ENCODE measurements at regions of chr17 and their contacts with region 1.

Region 1: GRCh38 chr17:42997984-42998938 is at the start of gene RPL27:
- DNase-seq: peak; percentile 86 to 99 (median 98)
- ATAC-seq: peak; percentile 94 to 95
- H3K4me3 Mint-ChIP-seq: peak within 1 kb of the TSS; percentile 93 to 98 (median 96)
- H3K27ac Mint-ChIP-seq: peak within 1 kb of the TSS; percentile 91 to 100 (median 99)
- H3K4me1 Mint-ChIP-seq: peaks cover 16 to 35% (median 27%) of the 10 kb centered on the region in 4 donors
- H3K27me3 Mint-ChIP-seq: no peaks in the 10 kb centered on the region
- polyA plus RNA-seq, gene RPL27: 2,416 to 2,846 (median 2,434) TPM

Region 2: DNA sequence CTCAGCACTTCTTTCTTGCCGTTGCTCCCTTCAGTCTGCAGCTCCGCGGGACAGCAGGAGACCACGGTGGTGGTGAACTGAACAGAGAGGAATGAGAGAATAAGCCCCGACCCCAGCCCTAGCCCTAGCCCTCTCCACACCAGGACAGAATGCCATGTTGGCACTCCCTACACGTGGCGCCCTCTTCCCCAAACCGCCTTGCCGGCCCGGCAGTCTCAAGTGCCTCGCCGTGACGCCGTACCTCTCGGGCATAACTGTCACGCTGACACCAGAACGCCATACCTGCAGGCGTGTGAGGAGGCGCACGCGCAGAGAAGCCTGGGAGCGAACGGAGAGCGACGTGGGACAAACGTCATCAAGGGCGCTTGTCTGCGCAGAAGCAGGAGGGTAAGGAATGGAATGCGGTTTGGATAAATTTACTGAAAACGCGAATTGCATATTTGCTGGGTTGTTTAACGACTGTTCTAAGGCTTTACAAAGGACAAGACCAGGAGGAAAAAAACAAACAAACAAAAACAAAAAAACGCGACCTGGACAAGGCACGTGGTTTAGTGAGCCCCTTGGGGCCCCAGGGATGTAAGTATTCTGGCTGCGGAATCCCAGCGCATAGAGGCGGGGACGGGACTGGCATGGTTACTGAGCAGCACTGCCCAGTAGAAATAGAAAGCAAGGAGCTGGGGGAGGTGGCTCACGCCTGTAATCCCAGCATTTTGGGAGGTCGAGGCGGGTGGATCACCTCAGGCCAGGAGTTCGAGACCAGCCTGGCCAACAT is 33.9 kb before region 1 on chr17 and contains the start of gene AARSD1:
- POLR2A ChIA-PET with region 1: interaction called, 11 read pairs
- DNase-seq: peak; percentile 79 to 95 (median 88)
- ATAC-seq: peak; percentile 97 to 98
- H3K4me3 Mint-ChIP-seq: peak within 1 kb of the TSS; percentile 88 to 99 (median 96)
- H3K27ac Mint-ChIP-seq: peak within 1 kb of the TSS; percentile 91 to 99 (median 96)
- H3K4me1 Mint-ChIP-seq: peaks cover 8 to 22% (median 20%) of the 10 kb centered on the region in 4 donors
- H3K27me3 Mint-ChIP-seq: peaks cover 0 to 2% (median 0%) of the 10 kb centered on the region in 5 donors
- polyA plus RNA-seq, gene AARSD1: 40.5 to 56.2 (median 45.2) TPM

Region 3: DNA sequence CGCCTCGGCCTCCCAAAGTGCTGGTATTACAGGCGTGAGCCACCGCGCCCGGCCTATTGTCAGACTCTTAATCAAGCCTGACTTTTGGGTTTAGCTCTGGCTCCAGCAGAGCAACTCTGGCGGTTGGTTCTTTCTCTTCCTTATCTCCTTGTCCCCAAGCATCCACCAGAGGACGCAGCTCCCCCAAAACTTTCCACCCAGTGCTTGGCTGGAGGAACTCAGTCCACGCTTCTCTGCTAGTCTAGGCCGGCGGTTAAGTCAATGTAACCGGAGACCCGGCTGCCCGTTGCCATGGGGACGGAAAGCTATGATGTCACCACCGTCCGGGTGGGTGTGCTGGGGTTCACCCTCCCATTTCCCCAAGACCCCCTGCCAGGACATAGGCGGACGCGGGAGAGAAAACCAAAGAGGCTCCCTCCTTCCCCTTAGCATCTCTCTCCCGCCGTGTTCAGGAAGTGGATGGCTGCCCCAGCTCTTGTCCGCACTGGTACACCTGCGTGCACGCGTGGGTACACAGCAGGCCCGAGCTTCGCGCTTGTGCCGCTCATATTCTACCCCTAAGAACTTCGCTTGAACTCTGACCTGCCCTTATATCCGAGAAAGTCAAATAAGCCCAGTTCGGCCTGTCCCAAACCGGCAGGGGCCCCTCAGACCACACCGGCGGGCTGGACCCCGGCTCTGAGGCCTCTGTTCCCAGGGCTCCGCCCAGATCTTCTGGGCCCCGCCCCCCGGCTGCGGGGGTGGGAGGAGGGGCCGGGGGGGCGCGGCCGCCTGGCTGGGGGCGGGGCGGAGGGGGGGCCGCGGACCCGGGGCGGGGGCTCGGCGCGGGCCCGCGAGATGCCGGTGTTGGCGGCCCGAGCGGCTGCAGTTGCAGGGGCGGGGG is 26.4 kb after region 1 on chr17 and contains the start of gene RND2:
- POLR2A ChIA-PET with region 1: interaction called, 29 read pairs
- DNase-seq: peak; percentile 72 to 93 (median 78)
- ATAC-seq: peak; percentile 66
- H3K4me3 Mint-ChIP-seq: peak within 1 kb of the TSS; percentile 84 to 95 (median 92)
- H3K27ac Mint-ChIP-seq: peak within 1 kb of the TSS; percentile 85 to 96 (median 94)
- H3K4me1 Mint-ChIP-seq: peaks cover 18 to 38% (median 27%) of the 10 kb centered on the region in 4 donors
- H3K27me3 Mint-ChIP-seq: no peaks in the 10 kb centered on the region
- polyA plus RNA-seq, gene RND2: 0.08 to 0.09 TPM in 2 of 3 donors, not detected in the other

Region 4: DNA sequence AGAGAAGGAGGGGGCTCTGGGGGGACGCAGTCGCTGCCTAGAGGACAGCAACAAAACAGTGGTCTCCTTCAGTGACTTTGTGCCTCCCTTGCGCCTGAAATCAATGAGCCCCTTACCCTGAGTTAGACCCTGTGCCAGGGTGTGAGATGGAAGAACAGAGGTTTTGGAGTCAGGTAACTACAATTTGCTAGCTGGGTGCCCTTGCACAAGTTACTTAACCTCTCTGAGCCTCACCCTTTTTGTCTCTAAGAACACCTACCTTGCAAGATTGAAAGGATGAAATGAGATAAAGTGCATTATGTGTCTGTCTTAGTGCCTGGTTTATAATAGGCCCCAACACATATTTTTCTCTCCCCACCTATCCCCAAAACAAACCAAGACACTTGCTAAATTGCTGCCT is 36.6 kb after region 1 on chr17:
- POLR2A ChIA-PET with region 1: no interaction called
- DNase-seq: no peak
- ATAC-seq: no peak
- H3K4me3 Mint-ChIP-seq: no peak overlapping the region
- H3K27ac Mint-ChIP-seq: peak overlapping the region in 2 of 10 donors; percentile 18 to 70
- H3K4me1 Mint-ChIP-seq: no peaks in the 10 kb centered on the region
- H3K27me3 Mint-ChIP-seq: no peaks in the 10 kb centered on the region

Region 5: DNA sequence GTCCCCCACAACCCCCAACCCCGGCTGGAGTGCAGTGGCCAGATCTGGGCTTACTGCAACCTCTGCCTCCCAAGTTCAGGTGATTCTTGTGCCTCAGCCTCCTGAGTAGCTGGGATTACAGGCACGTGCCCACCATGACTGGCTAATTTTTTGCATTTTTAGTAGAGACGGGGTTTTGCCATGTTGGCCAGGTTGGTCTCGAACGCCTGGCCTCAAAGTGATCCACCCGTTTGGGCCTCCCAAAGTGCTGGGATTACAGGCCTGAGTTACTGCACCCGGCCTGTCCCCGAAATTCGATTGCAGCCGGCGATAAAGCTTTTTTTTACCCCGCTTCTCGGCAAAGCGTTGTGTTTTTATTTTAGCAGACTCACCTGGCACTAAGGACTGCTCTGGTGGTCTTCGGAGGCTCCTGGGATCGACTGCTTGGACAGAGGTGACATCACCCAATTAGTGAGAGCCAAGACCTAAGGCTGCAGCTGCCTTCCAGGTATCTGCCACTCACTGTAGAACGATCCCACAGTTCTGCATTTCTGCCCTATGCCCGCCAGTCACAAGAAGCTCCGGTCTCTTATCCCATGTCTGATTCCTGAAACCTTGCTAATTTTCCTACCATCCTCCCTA is 318.4 kb after region 1 on chr17:
- POLR2A ChIA-PET with region 1: interaction called, 28 read pairs
- DNase-seq: peak in 3 of 10 donors; percentile 8 to 36 (median 31)
- ATAC-seq: no peak
- H3K4me3 Mint-ChIP-seq: peak overlapping the region in 4 of 10 donors; percentile 7 to 64 (median 51)
- H3K27ac Mint-ChIP-seq: peak overlapping the region in 8 of 10 donors; percentile 6 to 84 (median 58)
- H3K4me1 Mint-ChIP-seq: peaks cover 5 to 16% (median 13%) of the 10 kb centered on the region in 4 donors
- H3K27me3 Mint-ChIP-seq: no peaks in the 10 kb centered on the region

Region 6: DNA sequence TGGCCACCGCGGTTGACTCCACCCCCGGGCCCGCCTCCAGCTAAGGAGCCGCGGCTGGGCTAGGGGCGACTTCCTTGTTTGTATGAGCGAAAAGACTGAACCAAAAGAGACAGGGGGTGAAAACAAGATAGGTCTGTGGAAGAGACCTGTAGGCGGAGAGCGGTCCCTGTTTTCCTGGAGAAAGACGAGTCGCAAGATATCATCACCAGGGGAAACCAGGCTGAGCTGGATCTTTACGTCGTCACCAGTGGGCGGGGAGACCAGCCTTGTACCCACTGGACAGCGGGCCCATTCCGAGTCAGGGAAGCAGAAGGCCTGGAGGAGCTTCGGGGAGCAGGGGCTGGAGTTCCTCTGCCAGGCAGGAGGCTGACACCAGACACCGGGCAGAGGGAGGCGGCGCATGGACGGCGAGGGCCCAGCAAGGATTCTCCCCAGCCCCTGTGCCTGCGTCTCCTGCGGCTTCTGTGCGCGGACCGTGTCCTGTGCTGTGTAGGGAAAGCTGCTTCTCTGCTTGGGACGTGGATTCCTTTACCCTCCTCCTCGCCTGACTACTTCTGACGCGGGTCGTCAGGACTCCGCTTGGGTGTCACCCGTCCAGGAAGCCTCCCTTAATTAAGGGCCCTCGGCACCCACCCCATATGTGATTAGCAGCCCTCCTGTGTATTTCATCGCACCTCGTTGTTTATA is 390.2 kb after region 1 on chr17:
- POLR2A ChIA-PET with region 1: interaction called, 15 read pairs
- DNase-seq: peak; percentile 88 to 95 (median 92)
- ATAC-seq: peak; percentile 70 to 72
- H3K4me3 Mint-ChIP-seq: peak overlapping the region; percentile 93 to 97 (median 95)
- H3K27ac Mint-ChIP-seq: peak overlapping the region; percentile 95 to 100 (median 99)
- H3K4me1 Mint-ChIP-seq: peaks cover 15 to 38% (median 37%) of the 10 kb centered on the region in 4 donors
- H3K27me3 Mint-ChIP-seq: no peaks in the 10 kb centered on the region